Activated B cell treated with CpG ODN at 0.5 μM for 24 hours (primary cell): ENCODE measurements at regions of chr16 and their contacts with region 1.

Region 1: DNA sequence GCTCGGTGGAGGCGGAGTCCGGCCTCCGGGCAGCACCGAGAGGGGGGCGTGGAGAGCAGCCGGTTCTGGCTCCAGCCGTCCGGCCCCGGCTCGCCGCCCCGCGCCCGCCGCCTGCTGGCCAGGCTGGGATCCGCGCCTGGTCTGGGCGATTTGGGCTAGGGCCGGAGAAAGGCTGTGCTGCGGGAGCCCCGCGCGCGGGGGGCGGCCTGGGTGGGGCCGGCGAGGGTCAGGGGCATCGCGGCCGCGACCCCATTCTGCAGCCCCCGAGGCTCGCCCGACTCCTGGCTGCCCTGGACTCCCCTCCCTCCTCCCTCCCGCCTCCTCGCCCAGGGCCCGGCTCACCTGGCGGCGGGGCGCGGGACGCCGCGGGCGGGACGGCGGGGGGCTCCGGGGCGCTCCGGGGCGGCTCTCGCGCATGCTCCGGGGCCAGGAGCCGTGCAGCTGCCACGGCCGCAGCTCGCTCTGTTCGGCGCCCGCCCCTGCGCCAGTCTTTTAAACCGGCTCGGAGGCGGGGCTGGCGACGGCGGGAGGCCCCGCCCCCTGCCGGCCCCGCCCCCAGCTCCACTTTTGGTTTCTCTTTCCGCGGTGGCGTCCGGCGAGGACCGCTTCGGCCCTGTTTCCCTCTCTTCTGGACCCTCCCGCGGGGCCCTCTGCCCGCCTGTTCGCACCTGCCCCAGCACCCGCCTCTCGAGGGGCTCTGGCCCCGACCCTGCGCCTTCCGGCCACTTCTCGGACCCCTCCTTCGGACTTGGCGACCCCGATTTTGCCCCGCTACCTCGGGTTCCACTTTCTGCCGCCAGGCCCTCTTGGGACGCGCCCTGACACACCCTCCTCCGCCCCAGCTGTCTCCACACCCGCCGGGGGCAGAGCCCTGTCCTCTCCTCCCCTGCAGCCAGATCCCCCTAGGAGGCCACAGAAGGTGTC is at the start of gene SOCS1:
- DNase-seq: peak; percentile 92
- ATAC-seq: peak; percentile 71
- H3K4me3 Mint-ChIP-seq: peak within 1 kb of the TSS; percentile 98
- H3K27ac Mint-ChIP-seq: peak within 1 kb of the TSS; percentile 98
- H3K4me1 Mint-ChIP-seq: peaks cover 60% of the 10 kb centered on the region
- H3K27me3 Mint-ChIP-seq: no peaks in the 10 kb centered on the region
- CTCF ChIP-seq: peak; percentile 46
- total RNA-seq, gene SOCS1: 68.6 and 76.2 TPM in 2 replicates

Region 2: GRCh38 chr16:10957771-10958486 is 298.1 kb before region 1 on chr16:
- CTCF ChIA-PET with region 1: interaction called, 62 read pairs
- POLR2A ChIA-PET with region 1: interaction called, 169 read pairs
- intact Hi-C with region 1: no loop called
- DNase-seq: no peak
- ATAC-seq: peak; percentile 61
- H3K4me3 Mint-ChIP-seq: peak overlapping the region; percentile 42
- H3K27ac Mint-ChIP-seq: peak overlapping the region; percentile 59
- H3K4me1 Mint-ChIP-seq: peaks cover 67% of the 10 kb centered on the region
- H3K27me3 Mint-ChIP-seq: no peaks in the 10 kb centered on the region
- CTCF ChIP-seq: no peak

Region 3: GRCh38 chr16:11051879-11052808 is 203.9 kb before region 1 on chr16:
- CTCF ChIA-PET with region 1: interaction called, 4 read pairs
- POLR2A ChIA-PET with region 1: interaction called, 7 read pairs
- intact Hi-C with region 1: loop called (anchors 1 kb)
- DNase-seq: no peak
- ATAC-seq: peak; percentile 70
- H3K4me3 Mint-ChIP-seq: no peak overlapping the region
- H3K27ac Mint-ChIP-seq: peak overlapping the region; percentile 2
- H3K4me1 Mint-ChIP-seq: peaks cover 15% of the 10 kb centered on the region
- H3K27me3 Mint-ChIP-seq: no peaks in the 10 kb centered on the region
- CTCF ChIP-seq: no peak

Region 4: GRCh38 chr16:11181899-11182279 is 74.1 kb before region 1 on chr16:
- CTCF ChIA-PET with region 1: interaction called, 9 read pairs
- POLR2A ChIA-PET with region 1: interaction called, 161 read pairs
- intact Hi-C with region 1: loop called (anchors 1 kb)
- DNase-seq: no peak
- ATAC-seq: peak; percentile 35
- H3K4me3 Mint-ChIP-seq: peak overlapping the region; percentile 64
- H3K27ac Mint-ChIP-seq: peak overlapping the region; percentile 87
- H3K4me1 Mint-ChIP-seq: peaks cover 58% of the 10 kb centered on the region
- H3K27me3 Mint-ChIP-seq: no peaks in the 10 kb centered on the region
- CTCF ChIP-seq: no peak

Region 5: GRCh38 chr16:11283820-11284248 is 27.8 kb after region 1 on chr16:
- CTCF ChIA-PET with region 1: interaction called, 6 read pairs
- POLR2A ChIA-PET with region 1: interaction called, 22 read pairs
- intact Hi-C with region 1: no loop called
- DNase-seq: no peak
- ATAC-seq: no peak
- H3K4me3 Mint-ChIP-seq: no peak overlapping the region
- H3K27ac Mint-ChIP-seq: no peak overlapping the region
- H3K4me1 Mint-ChIP-seq: peaks cover 46% of the 10 kb centered on the region
- H3K27me3 Mint-ChIP-seq: no peaks in the 10 kb centered on the region
- CTCF ChIP-seq: no peak

Region 6: DNA sequence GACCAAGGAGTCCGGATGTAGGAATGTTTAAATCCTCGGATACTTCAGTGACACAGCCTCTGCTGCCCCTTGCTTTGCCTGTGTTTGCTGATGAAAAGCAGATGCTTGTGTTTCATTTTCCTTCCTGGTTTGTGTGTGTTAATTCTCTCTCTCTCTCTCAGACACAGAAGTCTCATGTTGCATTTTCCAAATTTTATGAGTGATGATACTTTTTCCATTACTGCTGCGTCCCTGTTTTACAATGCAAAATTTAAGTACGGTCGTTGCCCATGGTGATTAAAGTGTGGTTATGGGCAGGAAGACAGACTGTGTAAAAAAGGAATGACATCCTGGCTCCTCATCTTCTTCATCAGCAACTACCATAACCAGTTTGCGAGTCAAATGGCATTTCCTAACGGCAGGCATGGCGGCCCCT is 94.9 kb after region 1 on chr16:
- CTCF ChIA-PET with region 1: interaction called, 98 read pairs
- POLR2A ChIA-PET with region 1: interaction called, 252 read pairs
- intact Hi-C with region 1: loop called (anchors 1 kb)
- DNase-seq: no peak
- ATAC-seq: no peak
- H3K4me3 Mint-ChIP-seq: no peak overlapping the region
- H3K27ac Mint-ChIP-seq: no peak overlapping the region
- H3K4me1 Mint-ChIP-seq: peaks cover 71% of the 10 kb centered on the region
- H3K27me3 Mint-ChIP-seq: no peaks in the 10 kb centered on the region
- CTCF ChIP-seq: no peak

Region 7: DNA sequence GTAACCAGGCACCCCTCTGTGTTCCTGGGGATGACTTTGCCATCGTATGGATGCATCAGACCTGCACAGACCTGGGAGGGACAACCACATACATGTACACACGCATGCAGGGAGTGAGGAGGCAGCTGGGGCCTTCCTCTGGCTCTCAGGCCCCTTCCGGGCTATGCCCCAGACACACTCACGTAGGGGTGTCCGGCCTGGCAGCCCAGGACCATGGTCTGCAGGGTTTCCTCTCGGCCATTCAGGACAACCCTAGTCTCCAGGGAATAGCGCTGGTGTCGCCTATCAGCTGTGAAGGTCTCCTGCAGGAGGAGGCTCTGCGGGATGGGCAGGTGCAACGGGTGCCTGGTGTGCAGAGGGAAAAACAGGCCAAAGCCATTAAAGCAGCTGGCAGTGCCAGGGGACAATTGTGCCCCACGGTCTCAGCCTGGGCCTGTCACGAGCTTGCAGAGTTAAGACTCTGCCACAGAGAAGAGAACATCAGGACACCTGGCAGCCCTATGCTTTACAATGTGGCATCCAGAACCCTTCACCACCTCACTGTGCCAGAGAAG is 190.6 kb after region 1 on chr16:
- CTCF ChIA-PET with region 1: no interaction called
- POLR2A ChIA-PET with region 1: no interaction called
- intact Hi-C with region 1: no loop called
- DNase-seq: no peak
- ATAC-seq: no peak
- H3K4me3 Mint-ChIP-seq: no peak overlapping the region
- H3K27ac Mint-ChIP-seq: no peak overlapping the region
- H3K4me1 Mint-ChIP-seq: no peaks in the 10 kb centered on the region
- H3K27me3 Mint-ChIP-seq: peaks cover 1% of the 10 kb centered on the region
- CTCF ChIP-seq: no peak

Region 8: DNA sequence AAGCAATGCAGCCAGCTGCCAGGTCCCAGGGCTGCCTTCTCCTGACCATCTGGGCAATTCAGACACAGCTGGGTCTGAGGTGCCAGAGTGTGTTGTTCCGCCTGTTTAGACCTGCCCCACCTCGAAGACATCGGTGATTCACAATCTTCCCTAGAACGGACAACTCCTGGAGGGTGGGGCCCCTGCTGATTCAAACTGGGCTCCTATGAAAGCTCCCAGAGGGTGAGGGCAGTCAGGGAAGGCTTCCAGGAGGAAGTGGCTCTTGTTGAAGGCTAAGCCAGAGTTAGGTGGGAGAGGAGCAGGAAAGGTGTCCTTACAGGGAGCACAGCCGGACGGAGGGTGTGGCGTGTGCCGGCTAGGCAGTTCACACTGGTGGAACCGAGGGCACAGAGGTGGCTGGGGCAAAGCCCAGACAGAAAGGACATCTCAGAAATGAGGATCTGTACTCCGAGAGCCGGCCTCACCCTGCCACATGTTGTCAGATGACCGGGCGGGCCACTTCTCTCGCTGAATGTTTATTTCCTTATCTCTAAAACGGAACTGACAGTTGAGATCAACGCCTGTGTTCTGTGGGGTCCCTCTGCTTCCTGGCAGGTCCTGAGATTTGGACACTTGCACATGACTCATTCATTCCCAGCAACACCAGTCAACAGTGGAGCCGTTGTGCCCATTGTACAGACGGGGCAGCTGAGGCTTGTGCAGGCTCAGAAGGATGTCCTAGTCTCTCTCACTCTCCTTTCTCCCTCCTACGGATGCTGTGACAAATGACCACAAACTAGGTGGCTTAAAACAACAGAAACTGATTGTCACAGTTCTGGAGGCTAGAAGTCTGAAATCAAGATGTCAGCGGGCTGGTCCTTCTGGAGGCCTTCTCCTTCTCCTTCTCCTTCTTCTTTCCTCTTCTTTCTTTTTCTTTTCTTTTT is 357.6 kb after region 1 on chr16:
- CTCF ChIA-PET with region 1: no interaction called
- POLR2A ChIA-PET with region 1: no interaction called
- intact Hi-C with region 1: no loop called
- DNase-seq: no peak
- ATAC-seq: peak; percentile 69
- H3K4me3 Mint-ChIP-seq: peak overlapping the region; percentile 60
- H3K27ac Mint-ChIP-seq: peak overlapping the region; percentile 61
- H3K4me1 Mint-ChIP-seq: peaks cover 42% of the 10 kb centered on the region
- H3K27me3 Mint-ChIP-seq: no peaks in the 10 kb centered on the region
- CTCF ChIP-seq: no peak

Region 9: GRCh38 chr16:11689031-11689761 is 433.2 kb after region 1 on chr16:
- CTCF ChIA-PET with region 1: no interaction called
- POLR2A ChIA-PET with region 1: interaction called, 3 read pairs
- intact Hi-C with region 1: loop called (anchors 10 kb)
- DNase-seq: no peak
- ATAC-seq: peak; percentile 98
- H3K4me3 Mint-ChIP-seq: peak overlapping the region; percentile 58
- H3K27ac Mint-ChIP-seq: peak overlapping the region; percentile 84
- H3K4me1 Mint-ChIP-seq: peaks cover 77% of the 10 kb centered on the region
- H3K27me3 Mint-ChIP-seq: no peaks in the 10 kb centered on the region
- CTCF ChIP-seq: no peak